CD8-positive, alpha-beta memory T cell (primary cell): ENCODE measurements at regions of chr10 and their contacts with region 1.

Region 1: GRCh38 chr10:80444646-80445319 is 9.3 kb upstream of the TSPAN14 start:
- DNase-seq: peak in 4 of 5 donors; percentile 16 to 83 (median 60)
- H3K4me3 ChIP-seq: no peak overlapping the region
- H3K4me3 Mint-ChIP-seq: no peak overlapping the region
- H3K27ac ChIP-seq: no peak overlapping the region
- H3K27ac Mint-ChIP-seq: peak overlapping the region in 7 of 8 donors; percentile 13 to 76 (median 38)
- H3K4me1 ChIP-seq: peaks cover 30% of the 10 kb centered on the region
- H3K4me1 Mint-ChIP-seq: peaks cover 24 to 56% (median 44%) of the 10 kb centered on the region in 3 donors
- H3K27me3 ChIP-seq: no peaks in the 10 kb centered on the region
- H3K27me3 Mint-ChIP-seq: no peaks in the 10 kb centered on the region

Region 2: DNA sequence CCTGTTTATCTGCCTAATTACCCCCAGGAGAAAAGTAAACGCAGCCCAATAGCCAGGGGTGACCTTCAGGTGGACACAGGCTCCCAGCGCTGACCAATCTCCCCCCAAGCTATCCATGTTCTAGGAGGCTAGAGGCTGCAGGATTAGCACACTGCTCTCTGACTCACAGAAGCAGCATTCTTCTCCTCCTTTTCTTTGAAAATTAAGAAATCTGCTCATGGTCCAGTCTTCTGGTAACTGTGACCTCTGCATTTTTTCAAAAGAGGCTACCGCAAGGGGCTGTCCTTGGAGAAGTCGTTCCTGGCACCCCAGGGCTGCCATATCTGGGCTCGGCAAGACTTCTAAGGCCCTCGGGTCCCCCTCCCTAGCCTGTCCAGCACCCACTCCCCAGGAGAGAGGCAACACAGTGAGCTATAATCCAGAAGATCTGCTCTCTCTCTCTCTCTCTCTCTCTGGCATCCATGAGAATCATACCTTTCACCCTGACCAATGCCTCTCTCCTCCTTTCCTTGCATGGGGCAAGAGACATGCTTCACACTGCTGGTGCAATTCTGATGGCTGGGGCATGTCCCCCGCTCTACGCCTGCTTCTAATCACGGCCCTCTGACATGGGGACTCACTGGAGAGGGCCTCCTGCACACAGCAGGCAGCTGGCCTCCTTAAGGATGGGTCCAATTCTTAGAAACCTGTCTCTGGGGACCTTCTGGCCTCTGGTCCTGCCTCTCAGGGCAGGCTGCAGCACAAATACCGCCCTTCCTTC is 266.8 kb before region 1 on chr10:
- CTCF ChIA-PET with region 1: no interaction called
- POLR2A ChIA-PET with region 1: no interaction called
- DNase-seq: peak in 1 of 5 donors; percentile 33
- H3K4me3 ChIP-seq: no peak overlapping the region
- H3K4me3 Mint-ChIP-seq: no peak overlapping the region
- H3K27ac ChIP-seq: no peak overlapping the region
- H3K27ac Mint-ChIP-seq: peak overlapping the region in 5 of 8 donors; percentile 43 to 72 (median 68)
- H3K4me1 ChIP-seq: peaks cover 48% of the 10 kb centered on the region
- H3K4me1 Mint-ChIP-seq: peaks cover 57 to 75% (median 65%) of the 10 kb centered on the region in 3 donors
- H3K27me3 ChIP-seq: no peaks in the 10 kb centered on the region
- H3K27me3 Mint-ChIP-seq: no peaks in the 10 kb centered on the region

Region 3: GRCh38 chr10:80253266-80254245 is 191.2 kb before region 1 on chr10:
- CTCF ChIA-PET with region 1: no interaction called
- POLR2A ChIA-PET with region 1: no interaction called
- DNase-seq: no peak
- H3K4me3 ChIP-seq: no peak overlapping the region
- H3K4me3 Mint-ChIP-seq: peak overlapping the region in 2 of 7 donors; percentile 12 to 64
- H3K27ac ChIP-seq: no peak overlapping the region
- H3K27ac Mint-ChIP-seq: peak overlapping the region in 5 of 8 donors; percentile 2 to 89 (median 59)
- H3K4me1 ChIP-seq: no peaks in the 10 kb centered on the region
- H3K4me1 Mint-ChIP-seq: peaks cover 5 to 12% (median 8%) of the 10 kb centered on the region in 3 donors
- H3K27me3 ChIP-seq: no peaks in the 10 kb centered on the region
- H3K27me3 Mint-ChIP-seq: peaks cover 0 to 3% of the 10 kb centered on the region in 2 donors

Region 4: DNA sequence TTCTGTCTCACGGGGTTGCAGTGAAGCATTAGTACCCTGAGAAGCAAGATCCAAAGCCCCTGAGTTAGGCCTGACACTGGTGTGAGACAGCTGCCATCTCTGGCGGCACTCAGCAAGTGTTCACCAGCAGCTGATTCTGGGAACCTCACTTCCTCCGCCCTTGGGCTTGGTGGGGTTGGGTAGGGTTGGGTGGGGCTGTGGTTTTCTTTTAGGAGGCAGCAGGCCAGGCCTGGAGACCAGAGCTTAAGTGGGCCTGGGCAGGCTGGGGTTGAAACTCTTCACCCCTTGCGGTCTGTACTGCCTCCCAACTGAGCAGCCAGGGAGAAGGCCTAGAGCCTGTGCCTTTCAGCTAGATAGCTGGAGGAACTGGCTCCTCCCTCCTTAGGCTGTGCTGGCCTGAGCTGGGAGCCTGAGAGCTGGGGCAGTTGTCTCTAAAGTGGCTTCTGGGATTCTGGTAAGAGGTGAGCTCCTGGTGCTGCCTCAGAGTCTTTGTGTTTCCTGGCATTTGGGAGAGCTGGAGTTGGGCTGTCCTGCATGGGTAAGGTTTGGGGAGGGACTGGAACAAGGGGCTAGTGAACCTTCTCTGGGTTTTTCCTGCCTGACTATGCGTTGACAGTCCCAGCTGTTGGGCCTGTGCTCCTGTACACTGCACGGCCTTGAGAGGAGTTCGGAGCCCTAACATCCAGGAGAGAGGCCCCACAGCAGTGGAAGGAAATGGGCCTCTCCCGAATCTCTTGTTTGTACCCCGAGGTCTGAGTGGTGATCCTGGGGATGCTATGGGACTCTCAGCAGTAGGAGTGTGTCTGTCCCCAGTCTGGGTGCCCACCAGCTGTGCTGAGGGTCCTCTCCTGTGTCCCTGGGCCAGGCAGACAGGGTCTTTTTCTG is 14.5 kb after region 1 on chr10:
- CTCF ChIA-PET with region 1: interaction called, 55 read pairs
- POLR2A ChIA-PET with region 1: interaction called, 7 read pairs
- DNase-seq: peak; percentile 51 to 82 (median 61)
- H3K4me3 ChIP-seq: peak overlapping the region; percentile 76
- H3K4me3 Mint-ChIP-seq: peak overlapping the region; percentile 88 to 99 (median 99)
- H3K27ac ChIP-seq: peak overlapping the region; percentile 55
- H3K27ac Mint-ChIP-seq: peak overlapping the region; percentile 84 to 99 (median 95)
- H3K4me1 ChIP-seq: peaks cover 86% of the 10 kb centered on the region
- H3K4me1 Mint-ChIP-seq: peaks cover 85 to 92% (median 85%) of the 10 kb centered on the region in 3 donors
- H3K27me3 ChIP-seq: no peaks in the 10 kb centered on the region
- H3K27me3 Mint-ChIP-seq: no peaks in the 10 kb centered on the region

Region 5: DNA sequence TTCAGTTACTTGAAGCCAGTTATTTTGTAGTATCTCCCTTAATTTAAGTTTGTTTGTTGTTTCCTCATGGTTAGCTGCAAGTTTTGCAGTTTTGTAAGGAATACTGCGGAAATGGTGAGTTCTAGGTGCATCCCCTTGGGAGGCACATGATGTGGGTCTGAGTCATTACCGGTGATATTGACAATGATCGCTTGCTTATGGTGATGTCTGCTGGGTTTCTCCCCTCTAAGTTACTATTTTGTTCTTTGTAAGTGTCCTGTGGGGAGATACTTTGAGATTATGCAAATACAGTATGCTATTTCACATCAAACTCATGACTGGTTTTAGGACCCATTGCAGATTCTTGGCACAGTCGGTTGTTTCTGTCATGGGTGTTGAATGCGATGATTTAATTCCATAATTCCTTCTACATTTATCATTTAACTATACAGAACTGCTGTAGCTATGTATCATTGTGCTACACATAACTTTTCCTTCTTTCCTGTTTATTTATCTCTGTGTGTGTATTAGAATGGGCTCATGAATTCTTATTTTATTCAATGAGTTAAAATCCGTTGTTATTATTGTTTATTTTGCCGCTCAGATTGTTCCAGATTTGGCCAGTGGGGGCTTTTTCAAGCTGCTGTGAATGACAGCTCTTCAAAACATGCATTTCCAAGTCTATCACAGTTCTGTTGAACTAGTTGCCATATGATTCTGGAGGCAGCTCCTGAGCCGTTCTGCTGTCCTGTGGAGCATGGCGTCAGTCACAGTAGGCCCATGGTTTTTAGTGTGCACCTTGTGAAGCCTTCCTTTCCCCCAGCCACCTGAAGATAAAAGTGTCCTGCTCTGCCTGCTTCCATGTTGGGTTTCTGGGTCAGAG is 27.7 kb after region 1 on chr10:
- CTCF ChIA-PET with region 1: interaction called, 49 read pairs
- POLR2A ChIA-PET with region 1: no interaction called
- DNase-seq: no peak
- H3K4me3 ChIP-seq: peak overlapping the region; percentile 36
- H3K4me3 Mint-ChIP-seq: peak overlapping the region; percentile 34 to 99 (median 78)
- H3K27ac ChIP-seq: peak overlapping the region; percentile 28
- H3K27ac Mint-ChIP-seq: peak overlapping the region; percentile 73 to 98 (median 95)
- H3K4me1 ChIP-seq: peaks cover 88% of the 10 kb centered on the region
- H3K4me1 Mint-ChIP-seq: peaks cover 88 to 97% (median 95%) of the 10 kb centered on the region in 3 donors
- H3K27me3 ChIP-seq: no peaks in the 10 kb centered on the region
- H3K27me3 Mint-ChIP-seq: no peaks in the 10 kb centered on the region

Region 6: GRCh38 chr10:80498833-80499741 is 54.3 kb after region 1 on chr10:
- CTCF ChIA-PET with region 1: interaction called, 450 read pairs
- POLR2A ChIA-PET with region 1: no interaction called
- DNase-seq: peak in 2 of 5 donors; percentile 25 to 60
- H3K4me3 ChIP-seq: peak overlapping the region; percentile 35
- H3K4me3 Mint-ChIP-seq: peak overlapping the region; percentile 64 to 86 (median 78)
- H3K27ac ChIP-seq: peak overlapping the region; percentile 49
- H3K27ac Mint-ChIP-seq: peak overlapping the region; percentile 92 to 99 (median 96)
- H3K4me1 ChIP-seq: peaks cover 98% of the 10 kb centered on the region
- H3K4me1 Mint-ChIP-seq: peaks cover 97 to 100% (median 99%) of the 10 kb centered on the region in 3 donors
- H3K27me3 ChIP-seq: no peaks in the 10 kb centered on the region
- H3K27me3 Mint-ChIP-seq: no peaks in the 10 kb centered on the region

Region 7: DNA sequence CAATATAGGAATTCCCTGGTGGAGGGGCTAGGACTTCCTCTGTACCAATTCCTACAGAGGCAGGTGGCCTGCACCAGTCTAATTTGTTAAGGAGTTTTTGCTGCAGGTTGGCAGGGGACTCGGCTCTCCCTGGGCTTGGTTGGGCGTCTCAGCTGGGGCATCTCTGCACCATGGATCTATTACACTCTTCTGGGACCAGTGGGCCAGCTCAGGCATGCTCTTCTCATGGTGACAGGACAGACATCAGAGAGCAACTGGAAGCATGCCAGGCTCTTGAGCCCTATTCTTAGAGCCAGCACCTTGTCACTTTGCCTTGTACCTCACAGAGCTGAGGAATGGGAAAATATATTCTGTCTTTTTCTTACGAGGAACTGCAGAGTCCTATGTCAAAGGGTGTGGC is 167.5 kb after region 1 on chr10:
- CTCF ChIA-PET with region 1: no interaction called
- POLR2A ChIA-PET with region 1: no interaction called
- DNase-seq: no peak
- H3K4me3 ChIP-seq: no peak overlapping the region
- H3K4me3 Mint-ChIP-seq: no peak overlapping the region
- H3K27ac ChIP-seq: no peak overlapping the region
- H3K27ac Mint-ChIP-seq: no peak overlapping the region
- H3K4me1 ChIP-seq: no peaks in the 10 kb centered on the region
- H3K4me1 Mint-ChIP-seq: no peaks in the 10 kb centered on the region
- H3K27me3 ChIP-seq: no peaks in the 10 kb centered on the region
- H3K27me3 Mint-ChIP-seq: peaks cover 6 to 22% of the 10 kb centered on the region in 2 donors

Region 8: DNA sequence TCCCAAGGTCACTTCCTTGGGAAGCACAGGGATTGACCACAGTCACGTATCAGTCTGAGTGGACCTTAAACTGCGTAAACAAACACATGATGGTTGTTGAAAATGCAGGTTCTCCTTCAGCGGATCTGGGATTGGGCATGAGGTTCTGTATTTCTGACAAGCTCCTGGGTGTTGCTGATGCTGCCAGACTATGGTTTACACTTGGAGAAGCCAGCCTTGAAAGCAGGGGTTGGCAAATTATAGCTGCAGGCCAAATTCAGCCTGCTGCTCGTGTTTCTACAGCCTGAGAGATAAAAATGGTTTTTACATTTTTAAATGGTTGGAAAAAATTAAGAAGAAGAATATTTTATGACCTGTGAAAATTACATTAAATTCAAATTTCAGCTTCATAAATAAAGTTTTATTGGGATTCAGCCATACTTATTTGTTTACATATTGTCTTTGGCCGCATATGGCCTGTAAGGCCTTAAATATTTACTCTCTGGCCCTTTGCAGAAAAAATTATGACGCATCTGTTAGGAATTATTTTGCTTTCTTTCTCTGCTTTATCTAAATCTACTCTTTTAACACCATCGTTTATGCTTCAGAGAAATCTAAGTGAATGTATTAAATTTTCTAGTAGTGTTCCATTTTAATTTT is 202.5 kb after region 1 on chr10:
- CTCF ChIA-PET with region 1: no interaction called
- POLR2A ChIA-PET with region 1: no interaction called
- DNase-seq: no peak
- H3K4me3 ChIP-seq: no peak overlapping the region
- H3K4me3 Mint-ChIP-seq: no peak overlapping the region
- H3K27ac ChIP-seq: no peak overlapping the region
- H3K27ac Mint-ChIP-seq: no peak overlapping the region
- H3K4me1 ChIP-seq: no peaks in the 10 kb centered on the region
- H3K4me1 Mint-ChIP-seq: no peaks in the 10 kb centered on the region
- H3K27me3 ChIP-seq: peaks cover 3% of the 10 kb centered on the region
- H3K27me3 Mint-ChIP-seq: peaks cover 5 to 52% of the 10 kb centered on the region in 2 donors